WTC11 (cell line): ENCODE measurements at regions of chr7 and their contacts with region 1.

Region 1: DNA sequence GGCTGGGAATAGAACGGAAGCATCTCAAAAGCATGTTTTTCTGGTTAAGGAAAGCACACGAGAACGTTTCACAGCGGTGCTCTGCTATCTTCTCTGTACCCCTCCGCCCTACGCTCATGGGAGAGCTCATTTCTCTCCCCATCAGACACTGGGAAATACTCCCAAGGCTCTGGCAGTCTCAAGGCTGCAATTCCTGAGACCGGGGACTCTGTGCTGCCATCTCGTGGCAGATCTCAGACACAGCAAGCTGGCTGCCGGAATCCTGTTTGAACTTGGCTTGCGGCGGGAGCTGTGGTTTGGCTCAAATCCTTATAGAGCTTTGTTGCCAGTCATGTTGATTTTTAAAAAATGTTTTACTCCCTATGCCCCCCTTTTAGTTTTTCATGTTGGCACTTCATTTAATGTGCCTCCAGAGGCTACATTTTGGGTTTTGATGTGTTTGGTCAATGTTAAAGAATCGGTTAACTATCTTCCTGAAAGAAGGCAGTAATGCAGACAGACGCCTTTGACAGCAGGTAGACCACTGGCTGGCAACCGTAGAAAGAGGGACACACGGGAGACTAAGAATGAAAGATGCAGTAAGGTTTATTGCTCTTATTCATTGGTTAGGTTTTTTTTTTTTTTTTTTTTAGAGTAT is 27.6 kb downstream of the BMPER start:
- DNase-seq: peak; percentile 87
- ATAC-seq: peak; percentile 94
- H3K4me3 Mint-ChIP-seq: no peak overlapping the region
- H3K27ac Mint-ChIP-seq: no peak overlapping the region
- H3K4me1 Mint-ChIP-seq: peaks cover 24% of the 10 kb centered on the region
- H3K27me3 Mint-ChIP-seq: no peaks in the 10 kb centered on the region
- CTCF ChIP-seq: peak; percentile 81

Region 2: DNA sequence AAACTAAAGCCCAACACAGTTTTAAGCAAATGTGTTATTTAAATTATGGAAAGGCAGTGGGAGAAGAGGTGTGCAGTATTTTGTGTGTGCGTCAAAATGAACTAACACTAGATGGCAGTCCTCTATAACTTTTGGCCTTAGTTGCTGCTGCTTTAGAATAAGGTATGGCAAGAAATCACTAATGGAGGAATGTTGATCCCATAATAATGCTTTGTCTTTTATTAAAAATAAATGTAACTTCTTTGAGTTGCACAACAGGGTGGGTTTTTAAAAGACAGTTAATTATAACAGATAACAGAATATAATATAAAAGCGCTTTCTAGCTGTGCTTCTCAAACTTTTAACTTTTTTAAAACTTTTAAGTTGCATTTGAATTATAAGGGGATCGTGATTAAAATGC is 747.2 kb before region 1 on chr7:
- CTCF ChIA-PET with region 1: interaction called, 10 read pairs
- POLR2A ChIA-PET with region 1: no interaction called
- DNase-seq: no peak
- ATAC-seq: peak; percentile 84
- H3K4me3 Mint-ChIP-seq: no peak overlapping the region
- H3K27ac Mint-ChIP-seq: no peak overlapping the region
- H3K4me1 Mint-ChIP-seq: peaks cover 12% of the 10 kb centered on the region
- H3K27me3 Mint-ChIP-seq: no peaks in the 10 kb centered on the region
- CTCF ChIP-seq: peak; percentile 50; the same call in 1 of the 2 replicates

Region 3: GRCh38 chr7:33807779-33808482 is 125.0 kb before region 1 on chr7:
- CTCF ChIA-PET with region 1: interaction called, 16 read pairs
- POLR2A ChIA-PET with region 1: no interaction called
- DNase-seq: peak; percentile 81
- ATAC-seq: peak; percentile 97
- H3K4me3 Mint-ChIP-seq: no peak overlapping the region
- H3K27ac Mint-ChIP-seq: peak overlapping the region; percentile 30
- H3K4me1 Mint-ChIP-seq: peaks cover 10% of the 10 kb centered on the region
- H3K27me3 Mint-ChIP-seq: no peaks in the 10 kb centered on the region
- CTCF ChIP-seq: peak; percentile 50

Region 4: GRCh38 chr7:33895025-33895804 is 37.7 kb before region 1 on chr7:
- CTCF ChIA-PET with region 1: interaction called, 29 read pairs
- POLR2A ChIA-PET with region 1: no interaction called
- DNase-seq: peak; percentile 93
- ATAC-seq: peak; percentile 98
- H3K4me3 Mint-ChIP-seq: no peak overlapping the region
- H3K27ac Mint-ChIP-seq: no peak overlapping the region
- H3K4me1 Mint-ChIP-seq: peaks cover 26% of the 10 kb centered on the region
- H3K27me3 Mint-ChIP-seq: no peaks in the 10 kb centered on the region; the same call in 1 of the 2 replicates
- CTCF ChIP-seq: peak; percentile 88

Region 5: GRCh38 chr7:33946094-33946700 is 13.2 kb after region 1 on chr7:
- CTCF ChIA-PET with region 1: interaction called, 40 read pairs
- POLR2A ChIA-PET with region 1: no interaction called
- DNase-seq: no peak
- ATAC-seq: no peak
- H3K4me3 Mint-ChIP-seq: no peak overlapping the region
- H3K27ac Mint-ChIP-seq: no peak overlapping the region
- H3K4me1 Mint-ChIP-seq: peaks cover 9% of the 10 kb centered on the region
- H3K27me3 Mint-ChIP-seq: no peaks in the 10 kb centered on the region; the same call in 1 of the 2 replicates
- CTCF ChIP-seq: no peak

Region 6: DNA sequence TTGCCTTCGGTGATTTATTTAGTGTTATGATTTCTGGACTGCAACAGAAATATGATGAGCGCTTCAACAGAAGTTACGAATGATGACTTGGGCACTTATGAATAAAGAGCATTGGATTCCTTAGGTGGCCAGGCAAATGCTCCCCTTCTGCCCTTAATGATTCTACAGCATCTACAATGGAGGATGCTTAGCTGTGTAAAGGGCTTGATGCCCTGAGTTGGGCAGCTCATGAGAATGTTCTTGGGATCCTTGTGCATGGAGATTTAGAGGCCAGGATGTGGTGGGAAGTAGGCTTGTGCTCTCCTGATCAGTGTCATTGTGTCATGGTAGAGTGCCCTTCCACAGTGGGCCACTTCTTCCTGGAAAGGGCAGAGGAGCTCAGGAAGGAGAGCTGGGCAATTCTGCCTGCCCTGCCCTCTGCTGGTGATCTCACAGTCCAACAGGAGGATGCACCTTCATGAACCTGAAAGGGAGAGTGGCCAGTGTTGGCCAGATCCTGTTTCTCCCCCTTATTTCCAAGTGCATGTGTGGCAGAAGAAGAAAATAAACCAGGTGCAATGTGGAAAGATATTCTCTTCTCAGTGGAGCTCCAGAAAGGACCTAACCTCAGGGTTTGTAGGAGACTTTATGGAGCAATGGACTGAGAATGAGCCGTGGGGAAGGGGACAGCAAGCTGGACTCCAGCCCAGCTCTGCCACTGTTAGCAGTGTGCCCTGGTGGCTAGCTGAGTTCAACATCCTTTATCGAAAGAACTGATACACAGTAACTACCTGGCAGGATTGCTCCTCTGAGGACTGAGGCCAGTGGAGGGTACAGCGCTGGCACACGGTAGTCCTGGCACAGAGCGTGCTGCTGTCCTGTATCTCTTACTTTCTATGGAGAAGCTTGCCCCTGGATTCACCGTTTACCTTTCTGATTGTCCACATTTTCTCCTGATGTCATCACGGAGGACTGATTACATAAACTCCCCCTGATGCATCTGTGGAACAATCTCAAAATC is 155.2 kb after region 1 on chr7:
- CTCF ChIA-PET with region 1: interaction called, 26 read pairs
- POLR2A ChIA-PET with region 1: no interaction called
- DNase-seq: peak; percentile 73
- ATAC-seq: peak; percentile 98
- H3K4me3 Mint-ChIP-seq: no peak overlapping the region
- H3K27ac Mint-ChIP-seq: no peak overlapping the region
- H3K4me1 Mint-ChIP-seq: no peaks in the 10 kb centered on the region
- H3K27me3 Mint-ChIP-seq: no peaks in the 10 kb centered on the region
- CTCF ChIP-seq: peak; percentile 79